AG04449 (cell line): ENCODE measurements at regions of chr3 and their contacts with region 1.

Region 1: DNA sequence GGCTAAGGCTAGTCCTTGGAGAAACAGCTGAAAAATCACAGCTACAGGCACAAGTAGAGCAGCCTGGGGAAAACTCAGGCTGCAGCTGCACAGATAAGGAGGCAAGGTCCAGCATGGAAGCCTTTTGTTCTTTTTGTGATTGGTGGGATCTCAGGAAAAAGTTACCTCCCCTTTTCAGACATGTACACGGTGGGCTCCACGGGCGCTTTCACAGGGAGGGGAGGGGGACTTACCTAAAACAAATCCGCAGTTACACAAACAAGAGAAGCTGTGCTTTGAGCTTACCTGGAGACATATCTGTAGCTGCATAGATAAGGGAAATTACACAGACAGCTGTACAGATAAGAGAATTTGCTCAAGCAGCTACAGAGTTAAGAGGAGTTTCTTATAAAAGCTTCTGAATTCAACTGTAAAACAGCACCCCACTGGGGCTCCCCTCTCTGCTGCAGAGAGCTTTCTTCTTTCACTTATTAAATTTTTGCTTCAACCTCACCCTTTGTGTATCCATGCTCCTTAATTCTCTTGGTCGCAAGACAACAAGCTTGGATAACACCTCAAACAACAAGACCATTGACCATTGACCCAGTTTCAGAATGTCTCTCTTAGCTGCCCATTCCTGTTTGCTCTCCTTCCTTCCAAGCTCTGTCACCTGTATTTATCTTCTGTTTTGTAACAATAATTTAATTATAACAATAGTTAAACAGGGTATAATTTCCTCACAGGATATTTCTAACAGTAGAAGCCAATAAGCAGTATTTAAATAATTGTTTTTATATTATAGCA is 10.9 kb upstream of the CD200 start:
- DNase-seq: no peak
- H3K4me3 ChIP-seq: no peak overlapping the region
- CTCF ChIP-seq: no peak

Region 2: GRCh38 chr3:112303764-112304325 is 18.2 kb before region 1 on chr3:
- CTCF ChIA-PET with region 1: interaction called, 14 read pairs
- POLR2A ChIA-PET with region 1: no interaction called
- DNase-seq: no peak
- H3K4me3 ChIP-seq: peak overlapping the region; percentile 54
- CTCF ChIP-seq: no peak

Region 3: DNA sequence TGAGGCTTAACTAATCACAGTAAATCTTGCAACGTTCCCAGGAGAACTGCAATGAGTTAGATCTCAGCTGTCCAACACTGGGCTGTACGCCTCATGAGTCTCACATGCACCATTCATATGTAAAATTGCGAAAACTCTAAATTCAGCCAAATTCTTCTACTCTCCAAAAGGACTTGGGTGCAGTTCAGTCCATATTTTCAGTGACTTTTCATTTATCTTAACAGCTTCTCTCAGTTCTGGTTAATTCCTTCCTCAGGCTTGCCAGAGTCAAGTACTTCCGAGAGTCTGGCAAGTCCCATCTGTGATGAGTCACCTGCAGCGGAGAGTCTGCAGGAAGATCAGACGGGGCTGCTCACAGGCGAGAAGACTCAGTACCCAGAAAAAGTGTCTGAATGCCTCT is 307.4 kb after region 1 on chr3:
- CTCF ChIA-PET with region 1: no interaction called
- POLR2A ChIA-PET with region 1: no interaction called
- DNase-seq: peak; percentile 65
- H3K4me3 ChIP-seq: no peak overlapping the region
- CTCF ChIP-seq: no peak